ENCODE measurements at regions of chr2 and their contacts with region 1.

Region 1: DNA sequence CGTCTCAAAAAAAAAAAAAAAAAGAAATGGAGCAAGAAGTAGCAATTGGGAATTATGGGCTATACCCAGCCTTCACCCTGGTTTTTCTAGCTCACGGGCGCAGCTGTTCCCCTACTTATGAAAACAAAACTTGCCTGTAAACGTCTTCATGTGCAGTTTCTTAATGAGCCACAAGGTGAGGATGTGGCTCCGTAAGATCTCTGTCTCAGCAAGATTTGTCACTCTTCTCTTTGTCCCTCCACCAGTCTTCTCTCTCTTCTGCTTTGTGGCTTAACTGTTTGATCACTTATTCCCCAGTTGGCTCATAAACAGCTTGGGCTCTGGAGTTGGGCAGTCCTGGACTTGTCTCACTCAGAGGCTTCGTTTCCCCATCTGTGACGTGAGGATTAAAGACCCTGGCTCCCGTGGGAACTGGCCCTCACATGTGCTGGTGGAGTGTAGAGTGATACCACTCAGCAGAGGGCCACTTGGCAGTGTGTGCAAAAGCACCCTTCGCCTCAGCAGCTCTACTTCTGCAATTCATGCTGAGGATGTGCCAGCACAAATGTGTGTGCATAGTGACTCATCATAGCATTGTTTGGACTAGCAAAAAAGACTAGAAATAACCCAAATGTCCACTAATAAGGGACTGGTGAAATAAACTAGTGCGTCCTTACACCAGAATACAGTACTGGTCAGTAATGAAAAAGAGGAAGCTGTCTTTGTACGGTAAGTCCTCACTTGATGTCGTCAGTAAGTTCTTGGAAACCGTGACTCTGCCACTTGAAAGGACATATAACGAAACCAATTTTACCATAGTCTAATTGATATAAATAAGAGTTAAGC is 8.7 kb downstream of the CEP68 start:
- DNase-seq: peak; percentile 82
- H3K4me3 ChIP-seq: no peak overlapping the region
- H3K27ac ChIP-seq: peak overlapping the region; percentile 36
- H3K4me1 ChIP-seq: peaks cover 8% of the 10 kb centered on the region
- H3K27me3 ChIP-seq: no peaks in the 10 kb centered on the region
- CTCF ChIP-seq: peak; percentile 73

Region 2: GRCh38 chr2:64975232-64975821 is 89.6 kb before region 1 on chr2:
- CTCF ChIA-PET with region 1: no interaction called
- POLR2A ChIA-PET with region 1: no interaction called
- intact Hi-C with region 1: no loop called
- DNase-seq: no peak
- H3K4me3 ChIP-seq: no peak overlapping the region
- H3K27ac ChIP-seq: no peak overlapping the region
- H3K4me1 ChIP-seq: no peaks in the 10 kb centered on the region
- H3K27me3 ChIP-seq: no peaks in the 10 kb centered on the region
- CTCF ChIP-seq: no peak

Region 3: GRCh38 chr2:65169760-65170136 is 104.8 kb after region 1 on chr2:
- CTCF ChIA-PET with region 1: interaction called, 5 read pairs
- POLR2A ChIA-PET with region 1: no interaction called
- intact Hi-C with region 1: loop called (anchors 1 kb)
- DNase-seq: no peak
- H3K4me3 ChIP-seq: no peak overlapping the region
- H3K27ac ChIP-seq: no peak overlapping the region
- H3K4me1 ChIP-seq: no peaks in the 10 kb centered on the region
- H3K27me3 ChIP-seq: no peaks in the 10 kb centered on the region
- CTCF ChIP-seq: no peak

Region 4: GRCh38 chr2:65186872-65187851 is 122.2 kb after region 1 on chr2:
- CTCF ChIA-PET with region 1: interaction called, 5 read pairs
- POLR2A ChIA-PET with region 1: no interaction called
- intact Hi-C with region 1: loop called (anchors 1 kb)
- DNase-seq: peak; percentile 82
- H3K4me3 ChIP-seq: no peak overlapping the region
- H3K27ac ChIP-seq: no peak overlapping the region
- H3K4me1 ChIP-seq: no peaks in the 10 kb centered on the region
- H3K27me3 ChIP-seq: peaks cover 9% of the 10 kb centered on the region
- CTCF ChIP-seq: peak; percentile 85

Region 5: GRCh38 chr2:65576861-65577601 is 512.1 kb after region 1 on chr2:
- CTCF ChIA-PET with region 1: no interaction called
- POLR2A ChIA-PET with region 1: no interaction called
- intact Hi-C with region 1: loop called (anchors 2 kb)
- DNase-seq: peak; percentile 86
- H3K4me3 ChIP-seq: no peak overlapping the region
- H3K27ac ChIP-seq: peak overlapping the region; percentile 39
- H3K4me1 ChIP-seq: peaks cover 16% of the 10 kb centered on the region
- H3K27me3 ChIP-seq: no peaks in the 10 kb centered on the region
- CTCF ChIP-seq: no peak

Measured in A673 (cell line).